Heart right ventricle (tissue), 16 donors: ENCODE measurements at regions of chr1 and their contacts with region 1.

Region 1: GRCh38 chr1:243294723-243295121 is 38.9 kb downstream of the SDCCAG8 start:
- DNase-seq: no peak
- ATAC-seq: no peak
- H3K4me3 ChIP-seq: no peak overlapping the region
- H3K27ac ChIP-seq: no peak overlapping the region
- H3K4me1 ChIP-seq: no peaks in the 10 kb centered on the region
- H3K27me3 ChIP-seq: no peaks in the 10 kb centered on the region
- CTCF ChIP-seq: no peak

Region 2: GRCh38 chr1:243335292-243335691 is 40.6 kb after region 1 on chr1:
- intact Hi-C with region 1: loop called in 1 of 10 experiments (anchors 2 kb)
- DNase-seq: no peak
- ATAC-seq: no peak
- H3K4me3 ChIP-seq: no peak overlapping the region
- H3K27ac ChIP-seq: no peak overlapping the region
- H3K4me1 ChIP-seq: no peaks in the 10 kb centered on the region
- H3K27me3 ChIP-seq: no peaks in the 10 kb centered on the region
- CTCF ChIP-seq: no peak

Region 3: GRCh38 chr1:244727871-244728474 is 1433.3 kb after region 1 on chr1:
- intact Hi-C with region 1: loop called in 1 of 10 experiments (anchors 5 kb)
- DNase-seq: no peak
- ATAC-seq: no peak
- H3K4me3 ChIP-seq: no peak overlapping the region
- H3K27ac ChIP-seq: no peak overlapping the region
- H3K4me1 ChIP-seq: peaks cover 0 to 9% (median 3%) of the 10 kb centered on the region in 9 donors
- H3K27me3 ChIP-seq: peaks cover 0 to 13% (median 0%) of the 10 kb centered on the region in 7 donors
- CTCF ChIP-seq: no peak